ENCODE measurements at regions of chr4 and their contacts with region 1.

Region 1: GRCh38 chr4:129043523-129043922 is 49.8 kb downstream of the SCLT1 start:
- DNase-seq: peak; percentile 23
- ATAC-seq: peak; percentile 74
- H3K4me3 ChIP-seq: no peak overlapping the region
- H3K27ac ChIP-seq: no peak overlapping the region
- H3K4me1 ChIP-seq: no peaks in the 10 kb centered on the region
- H3K27me3 ChIP-seq: no peaks in the 10 kb centered on the region
- CTCF ChIP-seq: peak; percentile 52

Region 2: GRCh38 chr4:128707864-128708263 is 335.7 kb before region 1 on chr4:
- CTCF ChIA-PET with region 1: no interaction called
- POLR2A ChIA-PET with region 1: no interaction called
- intact Hi-C with region 1: no loop called
- DNase-seq: peak; percentile 42
- ATAC-seq: no peak
- H3K4me3 ChIP-seq: no peak overlapping the region
- H3K27ac ChIP-seq: no peak overlapping the region
- H3K4me1 ChIP-seq: no peaks in the 10 kb centered on the region
- H3K27me3 ChIP-seq: no peaks in the 10 kb centered on the region
- CTCF ChIP-seq: no peak

Region 3: DNA sequence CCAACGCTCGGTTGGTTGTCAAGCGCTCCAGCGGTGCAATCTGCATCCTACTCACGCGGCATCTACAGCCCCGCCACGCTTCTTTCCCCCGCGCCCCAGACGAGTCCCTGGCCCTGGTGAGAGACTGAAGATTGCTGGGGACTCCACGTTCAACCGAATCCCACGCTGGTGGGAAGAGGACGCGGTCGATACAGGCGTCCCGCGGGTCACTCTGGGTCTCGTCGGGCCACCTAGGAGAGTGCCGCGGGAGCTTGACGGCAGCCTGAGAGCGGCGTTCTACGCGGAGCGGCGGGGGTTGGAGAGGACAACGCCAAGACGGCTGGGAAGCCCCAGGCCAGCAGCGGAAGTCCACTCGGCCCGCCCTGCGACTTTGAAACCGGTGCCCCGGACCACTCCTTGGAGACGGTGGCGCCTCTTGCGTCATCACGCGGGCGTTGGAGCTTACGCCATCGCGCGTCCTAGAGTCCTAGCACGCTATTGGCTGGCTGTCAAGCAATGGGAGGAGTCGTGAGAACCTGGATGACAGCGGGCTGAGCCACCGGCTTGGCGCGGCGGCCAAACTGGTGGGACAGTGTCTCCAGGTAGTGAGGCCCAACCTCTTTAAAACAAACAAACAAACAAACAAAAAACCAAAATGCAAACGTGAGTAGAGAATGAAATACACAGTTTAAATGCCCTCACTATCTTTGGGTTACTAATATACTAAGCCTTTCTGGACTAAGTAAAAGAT is 49.8 kb after region 1 on chr4 and contains the start of gene SCLT1:
- CTCF ChIA-PET with region 1: no interaction called
- POLR2A ChIA-PET with region 1: no interaction called
- intact Hi-C with region 1: loop called (anchors 1 kb)
- DNase-seq: peak; percentile 98
- ATAC-seq: peak; percentile 87
- H3K4me3 ChIP-seq: peak within 1 kb of the TSS; percentile 83
- H3K27ac ChIP-seq: peak within 1 kb of the TSS; percentile 74
- H3K4me1 ChIP-seq: peaks cover 27% of the 10 kb centered on the region; the same call in 1 of the 2 replicates
- H3K27me3 ChIP-seq: no peaks in the 10 kb centered on the region
- CTCF ChIP-seq: no peak
- total RNA-seq, gene SCLT1: 14.2 and 15.2 TPM in 2 replicates

Region 4: GRCh38 chr4:129218360-129218759 is 174.8 kb after region 1 on chr4:
- CTCF ChIA-PET with region 1: no interaction called
- POLR2A ChIA-PET with region 1: no interaction called
- intact Hi-C with region 1: loop called (anchors 5 kb)
- DNase-seq: peak; percentile 53
- ATAC-seq: peak; percentile 97
- H3K4me3 ChIP-seq: no peak overlapping the region
- H3K27ac ChIP-seq: no peak overlapping the region
- H3K4me1 ChIP-seq: peaks cover 7% of the 10 kb centered on the region; the same call in 1 of the 2 replicates
- H3K27me3 ChIP-seq: no peaks in the 10 kb centered on the region
- CTCF ChIP-seq: peak; percentile 63

Region 5: GRCh38 chr4:129326571-129327460 is 283.3 kb after region 1 on chr4:
- CTCF ChIA-PET with region 1: interaction called, 3 read pairs
- POLR2A ChIA-PET with region 1: interaction called, 4 read pairs
- intact Hi-C with region 1: loop called (anchors 5 kb)
- DNase-seq: peak; percentile 29
- ATAC-seq: peak; percentile 27; the same call in 1 of the 2 replicates
- H3K4me3 ChIP-seq: no peak overlapping the region
- H3K27ac ChIP-seq: peak overlapping the region; percentile 77
- H3K4me1 ChIP-seq: peaks cover 20% of the 10 kb centered on the region
- H3K27me3 ChIP-seq: no peaks in the 10 kb centered on the region
- CTCF ChIP-seq: no peak